ENCODE measurements at regions of chr16 and their contacts with region 1.

Region 1: DNA sequence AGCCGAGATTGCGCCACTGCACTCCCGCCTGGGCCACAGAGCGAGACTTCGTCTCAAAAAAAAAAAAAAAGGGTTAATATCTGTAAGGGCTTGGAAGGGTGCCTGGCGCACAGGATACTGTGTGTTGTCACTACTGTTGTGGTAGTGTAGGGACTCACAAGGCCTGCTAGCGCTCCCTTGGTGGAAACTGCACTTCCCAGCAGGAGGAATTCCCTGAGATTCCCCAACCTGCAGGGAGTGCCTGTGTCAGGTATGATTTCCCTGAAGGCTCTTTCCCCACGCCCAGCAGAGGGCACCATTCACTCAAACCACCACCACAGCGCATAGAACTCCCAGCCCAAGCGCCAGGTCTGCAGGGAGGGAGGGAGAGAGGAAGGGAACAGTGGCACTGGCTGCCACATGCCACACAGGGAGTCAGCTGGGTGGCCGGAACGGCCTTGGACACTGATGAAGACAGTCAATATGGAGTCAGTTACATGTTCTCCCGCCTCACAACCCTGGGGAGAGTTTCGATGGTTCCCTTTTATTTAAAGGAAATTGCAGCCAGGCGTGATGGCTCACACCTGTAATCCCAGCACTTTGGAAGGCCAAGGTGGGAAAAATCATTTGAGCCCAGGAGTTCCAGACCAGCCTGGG is 32.7 kb upstream of the CDH1 start:
- DNase-seq: peak; percentile 83
- H3K4me3 ChIP-seq: no peak overlapping the region
- H3K27ac ChIP-seq: no peak overlapping the region
- H3K4me1 ChIP-seq: peaks cover 22% of the 10 kb centered on the region
- H3K27me3 ChIP-seq: no peaks in the 10 kb centered on the region
- CTCF ChIP-seq: peak; percentile 84 to 92

Region 2: DNA sequence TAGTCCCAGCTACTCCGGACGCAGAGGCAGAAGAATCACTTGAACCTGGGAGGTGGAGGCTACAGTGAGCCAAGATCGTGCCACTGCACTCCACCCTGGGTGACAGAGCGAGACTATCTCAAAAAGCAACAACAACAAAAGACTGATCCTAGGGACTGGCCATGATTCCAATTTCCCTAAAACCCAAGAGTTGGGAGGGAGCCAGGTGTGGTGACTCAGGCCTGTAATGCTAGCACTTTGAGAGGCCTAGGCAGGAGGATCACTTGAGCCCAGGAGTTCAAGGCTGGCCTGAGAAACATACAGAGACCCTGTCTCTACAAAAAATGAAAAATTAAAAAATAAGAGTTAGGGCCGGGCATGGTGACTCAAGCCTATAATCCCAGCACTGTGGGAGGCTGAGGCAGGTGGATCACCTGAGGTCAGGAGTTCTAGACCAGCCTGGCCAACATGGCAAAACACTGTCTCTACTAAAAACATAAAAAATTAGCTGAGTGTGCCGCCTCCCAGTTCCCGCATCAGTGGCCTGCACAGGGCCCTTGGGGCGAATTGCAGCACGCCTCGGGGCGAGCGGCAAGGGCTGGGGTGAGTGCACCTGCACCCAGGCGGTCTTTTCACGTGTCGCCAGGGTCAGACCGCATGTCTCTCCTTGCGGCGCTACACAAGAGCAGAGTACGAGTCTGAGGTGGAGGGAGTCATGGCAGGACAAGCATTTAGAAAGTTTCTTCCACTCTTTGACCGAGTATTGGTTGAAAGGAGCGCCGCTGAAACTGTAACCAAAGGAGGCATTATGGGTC is 18.5 kb before region 1 on chr16:
- CTCF ChIA-PET with region 1: no interaction called
- dilution Hi-C with region 1: no loop called
- in situ Hi-C with region 1: no loop called
- intact Hi-C with region 1: no loop called
- DNase-seq: peak; percentile 61
- H3K4me3 ChIP-seq: no peak overlapping the region
- H3K27ac ChIP-seq: no peak overlapping the region
- H3K4me1 ChIP-seq: no peaks in the 10 kb centered on the region
- H3K27me3 ChIP-seq: no peaks in the 10 kb centered on the region
- CTCF ChIP-seq: no peak

Region 3: GRCh38 chr16:68737046-68737729 is 32.8 kb after region 1 on chr16 and contains the start of gene CDH1:
- CTCF ChIA-PET with region 1: no interaction called
- dilution Hi-C with region 1: loop called (anchors 5 kb)
- in situ Hi-C with region 1: no loop called
- intact Hi-C with region 1: loop called (anchors 1 kb)
- DNase-seq: peak; percentile 89
- H3K4me3 ChIP-seq: peak within 1 kb of the TSS; percentile 88 to 97 (median 93)
- H3K27ac ChIP-seq: peak within 1 kb of the TSS; percentile 97
- H3K4me1 ChIP-seq: peaks cover 38% of the 10 kb centered on the region
- H3K27me3 ChIP-seq: no peaks in the 10 kb centered on the region
- CTCF ChIP-seq: no peak
- total RNA-seq, gene CDH1: 355 to 369 TPM

Region 4: DNA sequence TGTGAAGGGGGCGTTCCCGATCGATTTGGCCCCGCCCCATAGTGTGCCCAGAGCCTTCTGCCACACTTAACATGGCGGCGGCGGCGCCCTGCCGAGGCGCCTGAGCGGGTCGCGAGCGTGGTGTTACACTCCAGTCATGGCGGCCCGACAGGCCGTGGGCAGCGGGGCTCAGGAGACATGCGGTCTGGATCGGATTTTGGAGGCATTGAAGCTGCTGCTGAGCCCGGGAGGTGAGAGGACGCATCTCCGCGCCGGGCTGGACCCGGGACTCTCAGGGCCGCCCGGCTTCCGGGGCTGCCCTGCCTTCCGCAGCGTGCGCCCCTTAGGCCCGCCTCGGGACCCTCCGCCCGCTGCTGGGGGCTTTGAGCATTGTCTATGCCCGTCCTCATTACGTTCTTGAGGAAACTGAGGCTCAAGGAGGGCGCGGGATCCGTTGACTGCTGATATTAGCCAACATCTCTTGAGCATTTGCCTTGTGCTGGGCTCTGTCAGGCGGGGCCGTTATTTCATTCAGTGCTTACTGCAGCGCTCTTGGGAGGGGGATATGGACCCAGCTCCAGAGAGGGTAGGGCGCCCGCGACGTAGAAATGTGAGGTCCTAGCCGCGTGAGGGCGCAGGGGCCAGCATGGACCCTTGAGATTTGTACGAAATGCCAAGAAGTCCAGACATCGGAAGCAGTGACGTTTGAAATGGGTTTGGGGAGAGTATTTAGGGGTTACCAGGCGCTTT is 139.3 kb after region 1 on chr16 and contains the start of gene TANGO6:
- CTCF ChIA-PET with region 1: interaction called, 14 read pairs
- dilution Hi-C with region 1: no loop called
- in situ Hi-C with region 1: no loop called
- intact Hi-C with region 1: no loop called
- DNase-seq: peak; percentile 64
- H3K4me3 ChIP-seq: peak within 1 kb of the TSS; percentile 71 to 75 (median 73)
- H3K27ac ChIP-seq: peak within 1 kb of the TSS; percentile 52
- H3K4me1 ChIP-seq: peaks cover 4% of the 10 kb centered on the region
- H3K27me3 ChIP-seq: no peaks in the 10 kb centered on the region
- CTCF ChIP-seq: peak in 1 of 2 donors; percentile 20
- total RNA-seq, gene TANGO6: 18.2 to 24.5 TPM

Region 5: GRCh38 chr16:69859105-69859989 is 1155.0 kb after region 1 on chr16:
- CTCF ChIA-PET with region 1: no interaction called
- dilution Hi-C with region 1: no loop called
- in situ Hi-C with region 1: no loop called
- intact Hi-C with region 1: no loop called
- DNase-seq: peak; percentile 19
- H3K4me3 ChIP-seq: no peak overlapping the region
- H3K27ac ChIP-seq: no peak overlapping the region
- H3K4me1 ChIP-seq: no peaks in the 10 kb centered on the region
- H3K27me3 ChIP-seq: no peaks in the 10 kb centered on the region
- CTCF ChIP-seq: peak; percentile 28 to 54